Activated naive CD4-positive, alpha-beta T cell treated with anti-CD3 and anti-CD28 coated beads for 36 hours (primary cell): ENCODE measurements at regions of chr2 and their contacts with region 1.

Region 1: DNA sequence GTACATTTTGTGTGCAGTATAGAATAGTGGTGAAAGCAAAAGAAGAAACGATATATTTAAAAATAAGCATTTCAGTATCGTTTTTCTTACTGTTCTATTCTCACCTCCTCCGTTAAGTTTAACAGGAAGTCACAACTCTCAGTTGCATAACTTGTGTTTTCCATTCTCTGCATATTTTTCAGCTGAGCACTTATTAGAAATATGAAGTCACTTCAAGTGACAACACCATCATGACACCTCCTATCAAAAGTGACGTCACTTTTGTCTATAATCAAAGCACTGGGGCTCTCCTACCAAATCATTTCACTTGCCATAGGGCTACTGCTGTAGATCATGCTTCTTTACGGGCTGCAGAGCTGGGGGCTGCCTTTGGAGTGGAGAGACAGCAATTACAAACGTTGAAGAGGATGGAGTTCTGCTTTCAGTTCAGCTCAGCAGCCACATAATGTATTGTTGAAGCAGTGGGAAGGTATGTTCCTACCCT is 36.3 kb downstream of the STAT4 start:
- DNase-seq: peak; percentile 74
- H3K4me3 Mint-ChIP-seq: peak overlapping the region; percentile 57
- H3K27ac Mint-ChIP-seq: peak overlapping the region; percentile 87
- H3K4me1 Mint-ChIP-seq: peaks cover 78% of the 10 kb centered on the region
- H3K27me3 Mint-ChIP-seq: no peaks in the 10 kb centered on the region

Region 2: GRCh38 chr2:191020221-191020741 is 94.2 kb before region 1 on chr2:
- CTCF ChIA-PET with region 1: interaction called, 3 read pairs
- intact Hi-C with region 1: loop called (anchors 1 kb)
- DNase-seq: peak; percentile 93
- H3K4me3 Mint-ChIP-seq: no peak overlapping the region
- H3K27ac Mint-ChIP-seq: no peak overlapping the region
- H3K4me1 Mint-ChIP-seq: peaks cover 36% of the 10 kb centered on the region
- H3K27me3 Mint-ChIP-seq: no peaks in the 10 kb centered on the region

Region 3: DNA sequence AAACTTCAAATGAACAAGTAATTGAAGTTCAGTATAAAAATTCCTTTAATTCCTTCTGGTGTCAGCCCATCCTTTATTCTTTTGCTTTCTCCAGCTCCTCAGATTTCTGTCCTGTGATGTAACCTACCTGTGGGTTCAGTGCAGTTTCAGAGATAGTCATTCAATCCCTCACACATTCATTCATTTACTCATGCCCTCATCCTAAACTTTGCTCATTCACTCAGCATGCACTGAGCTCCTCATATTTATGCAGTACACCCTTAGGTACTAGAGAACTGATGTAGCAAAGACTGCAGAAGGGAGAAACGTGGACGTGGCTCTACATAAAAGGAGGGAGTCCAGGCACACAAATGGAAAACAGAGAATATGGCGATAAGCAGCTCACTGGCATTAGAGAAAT is 55.1 kb before region 1 on chr2:
- CTCF ChIA-PET with region 1: interaction called, 21 read pairs
- intact Hi-C with region 1: loop called (anchors 1 kb)
- DNase-seq: peak; percentile 27
- H3K4me3 Mint-ChIP-seq: no peak overlapping the region
- H3K27ac Mint-ChIP-seq: no peak overlapping the region
- H3K4me1 Mint-ChIP-seq: peaks cover 63% of the 10 kb centered on the region
- H3K27me3 Mint-ChIP-seq: no peaks in the 10 kb centered on the region

Region 4: DNA sequence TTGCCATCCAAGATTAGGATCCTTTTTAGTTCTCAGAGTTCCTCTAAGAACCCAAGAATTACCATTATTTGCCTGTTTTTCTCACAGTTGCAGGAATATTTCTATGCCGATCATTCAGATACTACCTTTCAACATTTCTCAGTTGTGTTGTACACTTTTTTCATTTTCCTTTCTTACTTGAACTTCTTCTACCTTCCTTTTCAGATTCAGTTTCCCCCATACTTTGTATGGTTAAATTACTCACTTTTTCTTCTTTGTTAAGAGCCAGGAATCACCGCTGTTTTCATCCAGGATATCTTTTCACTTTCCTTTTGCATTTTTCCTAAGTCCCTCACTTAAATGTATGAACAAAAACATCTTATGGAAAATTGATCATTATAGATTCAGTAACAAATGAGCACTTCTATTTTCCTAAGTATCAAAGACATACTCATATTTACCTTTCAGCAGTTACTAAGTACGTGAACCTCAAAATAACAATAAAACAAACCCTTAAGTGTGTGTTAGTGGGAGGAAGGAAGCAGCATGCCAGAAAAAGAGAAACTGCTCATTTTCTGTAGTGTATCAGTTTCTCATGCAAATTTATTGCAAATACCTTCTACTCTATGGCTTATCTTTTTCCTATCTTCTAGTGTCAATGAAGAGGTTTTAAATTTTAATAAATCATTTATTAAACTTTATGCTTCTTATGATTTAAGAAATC is 36.1 kb before region 1 on chr2:
- CTCF ChIA-PET with region 1: no interaction called
- intact Hi-C with region 1: loop called (anchors 1 kb)
- DNase-seq: no peak
- H3K4me3 Mint-ChIP-seq: peak overlapping the region; percentile 61
- H3K27ac Mint-ChIP-seq: peak overlapping the region; percentile 82
- H3K4me1 Mint-ChIP-seq: peaks cover 54% of the 10 kb centered on the region
- H3K27me3 Mint-ChIP-seq: no peaks in the 10 kb centered on the region

Region 5: DNA sequence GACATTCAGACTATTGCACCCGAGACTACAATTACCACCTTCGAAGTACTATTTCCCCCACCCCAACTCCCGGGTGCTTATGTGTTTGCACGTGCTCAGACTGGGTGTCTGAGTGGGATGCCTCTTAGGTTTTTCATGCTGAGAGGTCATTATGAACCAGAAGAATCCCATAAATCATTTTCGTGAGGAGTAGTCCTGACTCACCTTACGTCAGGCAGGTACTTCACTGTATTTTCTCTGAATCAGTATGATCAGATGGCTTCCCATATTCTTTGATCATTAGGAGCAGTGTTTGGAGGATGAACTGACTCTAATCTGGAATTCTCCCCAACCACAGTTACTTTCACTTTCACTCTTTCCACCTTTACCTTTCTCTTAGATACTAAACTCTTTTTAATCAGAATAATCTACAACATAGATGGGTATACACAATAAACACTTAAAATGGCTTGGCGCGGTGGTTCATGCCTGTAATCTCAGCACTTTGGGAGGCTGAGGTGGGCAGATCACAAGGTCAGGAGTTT is 74.7 kb after region 1 on chr2:
- CTCF ChIA-PET with region 1: no interaction called
- intact Hi-C with region 1: loop called (anchors 1 kb)
- DNase-seq: no peak
- H3K4me3 Mint-ChIP-seq: no peak overlapping the region
- H3K27ac Mint-ChIP-seq: peak overlapping the region; percentile 68
- H3K4me1 Mint-ChIP-seq: peaks cover 73% of the 10 kb centered on the region
- H3K27me3 Mint-ChIP-seq: no peaks in the 10 kb centered on the region

Region 6: DNA sequence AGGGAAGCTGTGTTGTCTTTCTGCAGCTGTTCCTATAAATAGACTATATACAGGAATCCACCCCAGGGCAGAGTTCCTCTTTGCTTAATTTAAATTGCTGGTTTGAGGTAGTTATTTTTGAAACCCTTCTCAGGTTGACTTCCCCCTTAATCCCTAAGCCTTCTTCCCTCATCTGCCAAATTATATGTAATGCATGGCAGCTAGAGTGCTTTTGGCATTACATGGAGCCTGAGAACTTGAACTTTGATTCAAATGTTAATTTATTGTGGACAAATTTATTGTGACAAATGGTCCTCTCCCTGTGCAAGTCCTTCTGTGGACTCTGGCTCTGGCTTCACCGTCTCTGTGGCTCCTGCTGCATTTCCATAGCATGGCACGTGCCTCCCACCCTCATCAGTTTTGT is 160.0 kb after region 1 on chr2:
- CTCF ChIA-PET with region 1: no interaction called
- intact Hi-C with region 1: no loop called
- DNase-seq: no peak
- H3K4me3 Mint-ChIP-seq: no peak overlapping the region
- H3K27ac Mint-ChIP-seq: no peak overlapping the region
- H3K4me1 Mint-ChIP-seq: peaks cover 2% of the 10 kb centered on the region
- H3K27me3 Mint-ChIP-seq: no peaks in the 10 kb centered on the region

Region 7: GRCh38 chr2:191617575-191617974 is 503.1 kb after region 1 on chr2:
- CTCF ChIA-PET with region 1: no interaction called
- intact Hi-C with region 1: loop called (anchors 5 kb)
- DNase-seq: peak; percentile 79
- H3K4me3 Mint-ChIP-seq: no peak overlapping the region
- H3K27ac Mint-ChIP-seq: peak overlapping the region; percentile 97
- H3K4me1 Mint-ChIP-seq: peaks cover 68% of the 10 kb centered on the region
- H3K27me3 Mint-ChIP-seq: no peaks in the 10 kb centered on the region